Natural killer cell (primary cell): ENCODE measurements at regions of chr14 and their contacts with region 1.

Region 1: GRCh38 chr14:91060351-91061055 is at the start of gene RPS6KA5:
- DNase-seq: peak; percentile 98 to 100
- ATAC-seq: peak; percentile 81 to 91 (median 82)
- H3K4me3 ChIP-seq: peak within 1 kb of the TSS; percentile 79
- H3K4me3 Mint-ChIP-seq: peak within 1 kb of the TSS; percentile 82
- H3K27ac ChIP-seq: peak within 1 kb of the TSS; percentile 93
- H3K27ac Mint-ChIP-seq: no peak within 1 kb of the TSS
- H3K4me1 ChIP-seq: peaks cover 39% of the 10 kb centered on the region
- H3K4me1 Mint-ChIP-seq: peaks cover 37 to 51% of the 10 kb centered on the region in 2 donors
- H3K27me3 ChIP-seq: no peaks in the 10 kb centered on the region
- H3K27me3 Mint-ChIP-seq: no peaks in the 10 kb centered on the region
- CTCF ChIP-seq: no peak
- total RNA-seq, gene RPS6KA5: 24.1 to 28.5 (median 27.9) TPM

Region 2: GRCh38 chr14:90383075-90383730 is 677.3 kb before region 1 on chr14:
- intact Hi-C with region 1: loop called (anchors 5 kb)
- DNase-seq: peak; percentile 96 to 98
- ATAC-seq: peak; percentile 84 to 94 (median 88)
- H3K4me3 ChIP-seq: peak overlapping the region; percentile 80
- H3K4me3 Mint-ChIP-seq: no peak overlapping the region
- H3K27ac ChIP-seq: peak overlapping the region; percentile 96
- H3K27ac Mint-ChIP-seq: no peak overlapping the region
- H3K4me1 ChIP-seq: peaks cover 25% of the 10 kb centered on the region
- H3K4me1 Mint-ChIP-seq: no peaks in the 10 kb centered on the region
- H3K27me3 ChIP-seq: no peaks in the 10 kb centered on the region
- H3K27me3 Mint-ChIP-seq: no peaks in the 10 kb centered on the region
- CTCF ChIP-seq: no peak

Region 3: GRCh38 chr14:90839024-90839888 is 221.2 kb before region 1 on chr14:
- intact Hi-C with region 1: no loop called
- DNase-seq: no peak
- ATAC-seq: no peak
- H3K4me3 ChIP-seq: no peak overlapping the region
- H3K4me3 Mint-ChIP-seq: no peak overlapping the region
- H3K27ac ChIP-seq: no peak overlapping the region
- H3K27ac Mint-ChIP-seq: no peak overlapping the region
- H3K4me1 ChIP-seq: peaks cover 19% of the 10 kb centered on the region
- H3K4me1 Mint-ChIP-seq: peaks cover 17 to 19% of the 10 kb centered on the region in 2 donors
- H3K27me3 ChIP-seq: peaks cover 3% of the 10 kb centered on the region
- H3K27me3 Mint-ChIP-seq: peaks cover 0 to 3% of the 10 kb centered on the region in 2 donors
- CTCF ChIP-seq: no peak

Region 4: DNA sequence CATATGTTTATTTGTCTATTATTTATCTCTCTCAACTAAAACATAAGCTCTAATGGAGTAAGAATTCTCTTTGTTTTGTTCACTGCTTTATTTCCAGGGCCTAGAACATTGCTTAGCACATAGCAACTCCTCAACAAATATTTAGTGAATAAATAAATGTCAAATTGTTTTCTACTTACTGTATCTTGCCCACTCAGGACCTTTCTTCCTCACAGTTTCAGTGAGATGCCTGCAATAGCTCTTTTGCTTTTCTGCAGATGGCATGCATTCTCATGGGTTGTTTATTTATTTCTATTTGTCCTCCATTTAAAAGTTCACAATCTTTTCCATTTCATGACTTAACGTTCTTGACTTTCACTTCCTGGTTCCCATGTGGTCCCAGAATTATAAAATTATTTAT is 149.4 kb before region 1 on chr14:
- intact Hi-C with region 1: no loop called
- DNase-seq: no peak
- ATAC-seq: no peak
- H3K4me3 ChIP-seq: no peak overlapping the region
- H3K4me3 Mint-ChIP-seq: no peak overlapping the region
- H3K27ac ChIP-seq: no peak overlapping the region
- H3K27ac Mint-ChIP-seq: no peak overlapping the region
- H3K4me1 ChIP-seq: no peaks in the 10 kb centered on the region
- H3K4me1 Mint-ChIP-seq: peaks cover 5 to 6% of the 10 kb centered on the region in 2 donors
- H3K27me3 ChIP-seq: no peaks in the 10 kb centered on the region
- H3K27me3 Mint-ChIP-seq: no peaks in the 10 kb centered on the region
- CTCF ChIP-seq: no peak

Region 5: DNA sequence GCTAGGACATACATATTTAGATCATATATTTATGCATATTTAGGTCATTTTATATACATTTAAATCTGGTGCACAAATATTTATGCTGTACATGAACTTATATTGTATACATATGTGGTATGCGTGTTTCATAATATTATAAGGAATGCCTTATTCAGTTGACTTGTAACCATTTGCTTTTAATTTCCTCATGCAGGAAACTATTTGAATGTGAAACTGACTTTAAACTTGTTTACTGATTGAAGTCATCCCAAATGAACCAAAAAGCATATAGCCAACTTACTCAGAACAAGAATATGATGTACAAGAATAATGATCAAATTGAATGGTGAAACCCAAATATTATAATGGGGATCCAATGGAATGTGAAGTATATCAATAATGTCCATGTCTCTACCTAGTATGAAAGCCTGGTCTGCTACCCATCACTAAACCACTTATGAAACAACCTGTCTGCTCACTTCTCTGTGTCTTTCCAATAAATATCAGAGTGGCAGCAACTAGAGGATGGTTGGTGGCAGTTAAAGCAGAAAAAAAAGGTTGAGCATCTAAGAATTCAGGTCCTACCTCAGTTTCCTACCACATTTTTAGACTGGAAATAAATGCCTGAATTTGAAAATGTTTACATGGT is 38.4 kb before region 1 on chr14:
- intact Hi-C with region 1: loop called (anchors 2 kb)
- DNase-seq: no peak
- ATAC-seq: peak; percentile 40 to 51 (median 43)
- H3K4me3 ChIP-seq: peak overlapping the region; percentile 48
- H3K4me3 Mint-ChIP-seq: peak overlapping the region; percentile 87
- H3K27ac ChIP-seq: peak overlapping the region; percentile 85
- H3K27ac Mint-ChIP-seq: peak overlapping the region; percentile 85 to 90
- H3K4me1 ChIP-seq: peaks cover 18% of the 10 kb centered on the region
- H3K4me1 Mint-ChIP-seq: peaks cover 36 to 39% of the 10 kb centered on the region in 2 donors
- H3K27me3 ChIP-seq: no peaks in the 10 kb centered on the region
- H3K27me3 Mint-ChIP-seq: no peaks in the 10 kb centered on the region
- CTCF ChIP-seq: no peak

Region 6: DNA sequence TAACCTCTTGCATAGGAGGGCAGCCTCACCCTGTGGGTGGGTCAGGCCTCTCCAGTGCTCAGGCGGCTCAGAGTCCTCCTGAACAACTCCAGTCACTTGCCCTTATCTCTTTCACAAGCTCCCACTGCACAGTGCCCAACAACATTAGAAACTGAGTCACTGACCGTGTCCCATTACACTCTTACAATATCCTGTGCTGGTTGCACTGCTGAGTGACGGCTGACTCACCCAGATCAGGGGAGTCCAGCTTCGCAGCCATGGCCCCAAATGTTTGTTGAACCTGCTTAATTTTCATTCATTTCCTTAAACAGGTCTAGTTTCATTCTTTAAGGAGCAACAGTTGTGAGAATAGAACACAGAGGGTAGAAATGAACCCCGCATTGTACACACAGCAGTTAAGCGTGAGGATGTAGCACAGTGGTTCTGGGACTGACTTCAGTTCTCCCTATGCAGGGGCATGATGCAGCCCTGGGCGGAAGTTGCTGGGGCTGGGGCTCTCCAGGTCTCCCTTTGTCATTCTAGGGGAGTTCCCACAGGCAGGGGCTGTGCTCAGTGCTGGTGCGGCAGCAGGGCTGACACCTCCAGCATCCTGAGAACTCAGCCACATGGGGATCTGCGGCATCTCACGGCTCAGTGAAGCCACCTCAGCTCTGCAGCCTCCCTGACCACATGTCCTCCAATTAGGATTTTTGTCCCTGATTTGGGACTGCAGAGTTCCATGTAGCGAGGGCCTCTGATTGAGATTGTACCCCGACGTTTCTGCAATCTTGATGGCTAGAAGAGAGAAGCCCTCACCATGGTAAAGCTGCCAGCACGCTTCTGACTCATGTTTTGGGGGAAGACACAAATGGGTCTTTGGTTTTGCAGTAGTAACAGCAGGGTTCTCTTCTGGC is 167.9 kb after region 1 on chr14:
- intact Hi-C with region 1: loop called (anchors 2 kb)
- DNase-seq: peak; percentile 79 to 94
- ATAC-seq: peak; percentile 68 to 88 (median 82)
- H3K4me3 ChIP-seq: no peak overlapping the region
- H3K4me3 Mint-ChIP-seq: peak overlapping the region; percentile 81
- H3K27ac ChIP-seq: peak overlapping the region; percentile 90
- H3K27ac Mint-ChIP-seq: peak overlapping the region; percentile 98 to 100
- H3K4me1 ChIP-seq: peaks cover 95% of the 10 kb centered on the region
- H3K4me1 Mint-ChIP-seq: peaks cover 79 to 89% of the 10 kb centered on the region in 2 donors
- H3K27me3 ChIP-seq: no peaks in the 10 kb centered on the region
- H3K27me3 Mint-ChIP-seq: no peaks in the 10 kb centered on the region
- CTCF ChIP-seq: no peak

Region 7: GRCh38 chr14:91317381-91318308 is 257.1 kb after region 1 on chr14:
- intact Hi-C with region 1: loop called (anchors 10 kb)
- DNase-seq: peak; percentile 55 to 85
- ATAC-seq: peak; percentile 27 to 57 (median 35)
- H3K4me3 ChIP-seq: no peak overlapping the region
- H3K4me3 Mint-ChIP-seq: peak overlapping the region; percentile 84
- H3K27ac ChIP-seq: peak overlapping the region; percentile 96
- H3K27ac Mint-ChIP-seq: peak overlapping the region; percentile 98
- H3K4me1 ChIP-seq: peaks cover 55% of the 10 kb centered on the region
- H3K4me1 Mint-ChIP-seq: peaks cover 54 to 57% of the 10 kb centered on the region in 2 donors
- H3K27me3 ChIP-seq: no peaks in the 10 kb centered on the region
- H3K27me3 Mint-ChIP-seq: no peaks in the 10 kb centered on the region
- CTCF ChIP-seq: no peak

Region 8: DNA sequence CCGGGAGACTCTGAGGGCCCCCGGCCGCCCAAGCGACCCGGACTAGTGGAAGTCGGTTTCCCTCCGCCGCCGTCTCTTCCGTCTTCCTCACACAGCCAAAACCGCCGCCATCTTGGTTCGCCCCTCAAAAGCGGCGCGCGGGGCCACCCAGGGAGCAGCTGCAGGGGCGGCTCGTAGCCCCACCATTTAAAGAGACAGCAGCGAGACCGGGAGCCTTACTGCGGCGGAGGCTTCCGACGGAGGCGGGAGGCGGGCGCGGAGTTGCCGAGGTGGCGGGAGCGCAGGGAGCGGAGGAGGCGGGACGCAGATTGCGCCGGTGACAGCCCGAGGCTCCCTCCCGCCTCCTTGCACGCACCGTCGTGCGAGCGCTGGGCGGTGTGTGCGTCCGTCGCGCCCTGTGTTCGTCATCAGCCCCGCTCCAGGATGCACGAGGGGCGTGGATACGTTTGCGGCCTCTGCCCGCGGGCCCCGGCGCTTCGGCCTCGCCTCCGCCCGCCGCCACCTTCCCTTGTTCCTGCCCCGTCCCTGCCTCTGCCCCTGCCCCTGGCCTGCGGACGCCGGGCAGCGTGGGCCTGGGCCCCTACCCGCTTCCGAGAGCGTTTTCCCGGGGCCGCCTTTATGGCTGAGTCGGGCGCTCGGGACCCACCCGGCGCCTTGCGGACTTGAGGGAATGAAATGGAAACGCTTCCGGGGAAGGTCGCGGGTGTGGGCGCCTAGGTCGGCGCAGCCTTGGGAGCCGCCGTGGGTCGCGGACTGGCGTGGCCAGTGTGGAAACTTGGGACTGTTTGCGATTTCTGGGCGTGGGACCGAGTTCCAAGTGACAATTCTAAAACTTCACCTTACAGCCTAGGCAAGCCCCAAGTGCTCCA is 449.9 kb after region 1 on chr14 and contains the start of gene PPP4R3A:
- intact Hi-C with region 1: loop called (anchors 2 kb)
- DNase-seq: peak; percentile 92 to 98
- ATAC-seq: peak; percentile 83 to 93 (median 84)
- H3K4me3 ChIP-seq: peak within 1 kb of the TSS; percentile 100
- H3K4me3 Mint-ChIP-seq: peak within 1 kb of the TSS; percentile 100
- H3K27ac ChIP-seq: peak within 1 kb of the TSS; percentile 99
- H3K27ac Mint-ChIP-seq: peak within 1 kb of the TSS; percentile 99 to 100
- H3K4me1 ChIP-seq: peaks cover 25% of the 10 kb centered on the region
- H3K4me1 Mint-ChIP-seq: peaks cover 18 to 35% of the 10 kb centered on the region in 2 donors
- H3K27me3 ChIP-seq: no peaks in the 10 kb centered on the region
- H3K27me3 Mint-ChIP-seq: no peaks in the 10 kb centered on the region
- CTCF ChIP-seq: no peak
- total RNA-seq, gene PPP4R3A: 168 to 216 (median 180) TPM